ENCODE measurements at regions of chr5 and their contacts with region 1.

Region 1: GRCh38 chr5:172179361-172179989 is 8.5 kb downstream of the STK10 start:
- DNase-seq: peak; percentile 74
- ATAC-seq: peak; percentile 11
- H3K4me3 Mint-ChIP-seq: peak overlapping the region; percentile 78
- H3K27ac Mint-ChIP-seq: peak overlapping the region; percentile 98
- H3K4me1 Mint-ChIP-seq: peaks cover 89% of the 10 kb centered on the region
- H3K27me3 Mint-ChIP-seq: no peaks in the 10 kb centered on the region

Region 2: GRCh38 chr5:172106511-172107356 is 72.7 kb before region 1 on chr5:
- CTCF ChIA-PET with region 1: interaction called, 257 read pairs
- DNase-seq: peak; percentile 68
- ATAC-seq: no peak
- H3K4me3 Mint-ChIP-seq: no peak overlapping the region
- H3K27ac Mint-ChIP-seq: peak overlapping the region; percentile 80
- H3K4me1 Mint-ChIP-seq: peaks cover 56% of the 10 kb centered on the region
- H3K27me3 Mint-ChIP-seq: no peaks in the 10 kb centered on the region

Region 3: GRCh38 chr5:172114875-172115422 is 64.5 kb before region 1 on chr5:
- CTCF ChIA-PET with region 1: interaction called, 257 read pairs
- DNase-seq: peak; percentile 98
- ATAC-seq: peak; percentile 84
- H3K4me3 Mint-ChIP-seq: peak overlapping the region; percentile 88
- H3K27ac Mint-ChIP-seq: peak overlapping the region; percentile 98
- H3K4me1 Mint-ChIP-seq: peaks cover 83% of the 10 kb centered on the region
- H3K27me3 Mint-ChIP-seq: no peaks in the 10 kb centered on the region

Measured in activated CD8-positive, alpha-beta memory T cell treated with anti-CD3 and anti-CD28 coated beads, Interleukin-2, amount 10 ng/mL, durations not matched to agents 7 days and 5 days (primary cell).